Activated naive CD4-positive, alpha-beta T cell treated with anti-CD3 and anti-CD28 coated beads for 36 hours (primary cell): ENCODE measurements at regions of chr3 and their contacts with region 1.

Region 1: DNA sequence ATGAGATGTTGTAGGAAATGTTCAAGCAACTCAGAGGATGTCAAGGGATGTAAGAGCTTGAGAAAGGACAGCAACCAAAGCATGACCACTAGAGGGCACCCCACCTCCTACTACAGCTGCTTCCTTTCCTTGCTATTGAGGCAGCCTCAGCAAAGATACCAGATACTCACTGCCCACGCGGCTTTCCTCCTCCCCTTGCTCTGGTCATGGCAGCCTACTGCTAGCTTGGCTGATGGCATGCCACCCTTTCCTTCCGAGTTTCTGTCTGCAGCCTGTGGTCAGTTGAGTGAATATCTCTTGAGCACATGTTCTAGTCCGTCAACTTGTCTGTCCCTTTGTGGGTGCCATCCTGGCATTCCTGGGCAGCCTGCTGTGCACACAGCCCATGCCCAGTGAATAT is 4.4 kb upstream of the CXCR6 start:
- DNase-seq: peak; percentile 94
- H3K4me3 Mint-ChIP-seq: no peak overlapping the region
- H3K27ac Mint-ChIP-seq: no peak overlapping the region
- H3K4me1 Mint-ChIP-seq: peaks cover 25% of the 10 kb centered on the region
- H3K27me3 Mint-ChIP-seq: peaks cover 3% of the 10 kb centered on the region

Region 2: DNA sequence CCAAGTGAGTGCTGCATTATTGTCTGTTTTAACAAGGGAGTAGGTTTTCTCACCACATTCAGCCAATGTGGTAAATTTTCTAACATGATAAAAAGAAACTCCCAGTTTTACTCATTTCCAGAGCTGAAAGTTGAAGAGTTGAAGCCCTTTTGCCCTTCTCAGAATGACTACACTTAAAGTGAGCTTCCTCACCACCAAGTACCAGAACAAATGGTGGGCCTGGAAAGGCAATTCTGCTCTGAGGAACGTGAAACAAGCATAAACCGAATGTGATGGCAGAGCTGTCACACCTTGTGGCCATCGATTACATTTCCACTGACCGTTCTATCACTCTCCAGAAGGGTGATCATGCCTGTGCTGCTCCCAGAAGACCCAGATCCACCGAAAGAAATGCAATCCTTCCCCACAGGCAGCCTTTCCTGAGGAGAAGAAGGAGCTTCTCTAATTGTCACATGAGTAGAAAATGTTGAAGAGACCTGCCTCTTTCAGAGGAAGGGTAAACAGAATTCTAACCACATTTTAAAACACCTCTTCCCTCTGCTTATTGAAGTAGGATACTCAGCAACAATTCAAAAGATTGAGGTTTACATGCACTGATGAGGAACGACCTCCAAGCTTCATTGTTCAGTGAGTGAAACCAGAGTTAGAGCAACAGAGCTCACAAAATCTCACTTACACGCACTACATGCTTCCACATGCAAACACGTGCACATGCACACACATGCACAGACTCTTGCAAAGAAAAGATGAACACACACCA is 73.9 kb before region 1 on chr3:
- CTCF ChIA-PET with region 1: no interaction called
- intact Hi-C with region 1: loop called (anchors 1 kb)
- DNase-seq: peak; percentile 48
- H3K4me3 Mint-ChIP-seq: no peak overlapping the region
- H3K27ac Mint-ChIP-seq: no peak overlapping the region
- H3K4me1 Mint-ChIP-seq: peaks cover 44% of the 10 kb centered on the region
- H3K27me3 Mint-ChIP-seq: peaks cover 53% of the 10 kb centered on the region

Region 3: DNA sequence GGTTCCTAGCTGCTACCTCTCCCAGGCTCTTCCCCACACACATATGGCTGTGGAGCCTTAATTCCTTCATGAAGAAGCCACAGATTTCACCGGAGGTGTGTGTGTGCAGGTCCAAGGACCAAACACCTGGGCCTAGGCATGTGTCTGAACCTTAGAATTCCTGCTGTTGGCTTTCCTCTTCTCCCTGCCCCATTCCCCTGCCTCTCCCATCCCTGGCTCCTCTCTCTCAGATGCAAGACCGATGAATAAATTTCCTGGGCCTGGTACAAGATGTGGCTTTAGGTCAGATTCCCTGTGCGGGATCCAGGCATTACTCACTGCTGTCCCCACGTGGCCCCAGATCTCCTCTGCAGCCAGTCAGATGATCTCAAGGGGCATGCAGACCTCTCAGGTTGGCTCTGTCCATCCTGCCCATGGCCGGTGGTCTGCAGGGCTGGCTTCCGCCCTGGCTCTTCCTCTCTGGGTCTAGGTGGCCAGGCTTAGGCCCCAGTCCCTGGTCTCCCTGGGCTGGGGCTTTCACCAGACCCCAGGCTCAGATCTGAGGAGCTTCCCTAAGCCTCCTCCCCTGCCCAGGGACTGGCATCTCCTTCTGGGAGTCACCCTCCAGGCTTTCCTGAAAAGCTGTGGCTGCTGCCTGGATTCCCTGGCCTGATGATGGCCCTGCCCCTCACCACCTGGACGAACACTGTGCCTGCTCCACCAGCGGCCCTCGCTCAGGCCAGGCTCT is 32.0 kb before region 1 on chr3:
- CTCF ChIA-PET with region 1: no interaction called
- intact Hi-C with region 1: no loop called
- DNase-seq: no peak
- H3K4me3 Mint-ChIP-seq: no peak overlapping the region
- H3K27ac Mint-ChIP-seq: no peak overlapping the region
- H3K4me1 Mint-ChIP-seq: peaks cover 11% of the 10 kb centered on the region
- H3K27me3 Mint-ChIP-seq: no peaks in the 10 kb centered on the region

Region 4: GRCh38 chr3:45962033-45962432 is 23.2 kb after region 1 on chr3:
- CTCF ChIA-PET with region 1: interaction called, 9 read pairs
- intact Hi-C with region 1: loop called (anchors 1 kb)
- DNase-seq: peak; percentile 75
- H3K4me3 Mint-ChIP-seq: no peak overlapping the region
- H3K27ac Mint-ChIP-seq: no peak overlapping the region
- H3K4me1 Mint-ChIP-seq: peaks cover 52% of the 10 kb centered on the region
- H3K27me3 Mint-ChIP-seq: no peaks in the 10 kb centered on the region

Region 5: DNA sequence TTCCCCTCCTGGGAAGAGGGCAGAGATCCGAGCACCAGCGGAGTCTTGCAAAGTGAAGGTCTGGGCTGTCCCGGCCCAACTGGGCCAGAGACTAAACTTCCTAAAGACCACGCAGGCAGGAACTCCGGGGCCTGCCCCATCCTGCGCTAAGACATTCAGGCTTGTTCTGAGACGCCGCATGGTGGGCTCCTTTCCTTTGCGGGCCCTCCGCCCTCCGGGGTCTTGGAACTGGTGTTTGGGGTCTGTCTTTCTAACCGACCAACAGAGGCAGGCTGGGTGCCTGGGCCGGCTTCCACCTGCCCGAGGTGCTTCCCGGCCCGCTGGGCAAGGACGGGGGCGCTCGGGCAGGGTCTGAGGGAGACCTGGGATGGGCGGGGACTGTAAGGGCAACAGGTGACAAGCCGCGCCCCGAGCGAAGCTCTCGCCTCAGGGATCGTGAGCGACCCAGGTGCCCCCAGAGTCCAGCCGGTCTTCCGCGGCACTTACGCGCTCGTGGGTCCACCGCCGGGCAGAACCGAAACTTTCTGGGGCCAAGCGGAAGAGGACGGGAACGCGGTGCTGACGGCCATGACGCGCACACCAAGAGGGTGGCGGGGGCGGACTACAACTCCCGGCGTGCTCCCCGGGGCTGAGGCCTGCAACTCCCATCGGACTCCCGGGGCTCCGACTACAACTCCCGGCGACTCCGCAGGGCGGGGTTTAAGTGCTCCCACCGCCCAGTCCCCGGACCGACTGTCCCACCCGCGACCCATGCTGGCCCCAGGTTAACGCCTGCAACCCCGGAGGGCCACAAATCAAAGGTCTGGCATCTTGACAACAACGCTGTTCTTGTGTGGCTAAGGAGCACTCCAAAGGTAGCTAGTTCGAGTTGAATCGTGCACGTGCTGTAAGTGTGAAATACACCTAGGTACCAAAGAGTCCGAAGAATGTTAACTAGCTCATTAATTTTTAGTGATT is 56.6 kb after region 1 on chr3 and contains the start of gene FYCO1:
- CTCF ChIA-PET with region 1: interaction called, 6 read pairs
- intact Hi-C with region 1: loop called (anchors 2 kb)
- DNase-seq: peak; percentile 94
- H3K4me3 Mint-ChIP-seq: peak within 1 kb of the TSS; percentile 82
- H3K27ac Mint-ChIP-seq: peak within 1 kb of the TSS; percentile 81
- H3K4me1 Mint-ChIP-seq: peaks cover 31% of the 10 kb centered on the region
- H3K27me3 Mint-ChIP-seq: peaks cover 3% of the 10 kb centered on the region
- total RNA-seq, gene FYCO1: 10.2 to 10.5 TPM

Region 6: DNA sequence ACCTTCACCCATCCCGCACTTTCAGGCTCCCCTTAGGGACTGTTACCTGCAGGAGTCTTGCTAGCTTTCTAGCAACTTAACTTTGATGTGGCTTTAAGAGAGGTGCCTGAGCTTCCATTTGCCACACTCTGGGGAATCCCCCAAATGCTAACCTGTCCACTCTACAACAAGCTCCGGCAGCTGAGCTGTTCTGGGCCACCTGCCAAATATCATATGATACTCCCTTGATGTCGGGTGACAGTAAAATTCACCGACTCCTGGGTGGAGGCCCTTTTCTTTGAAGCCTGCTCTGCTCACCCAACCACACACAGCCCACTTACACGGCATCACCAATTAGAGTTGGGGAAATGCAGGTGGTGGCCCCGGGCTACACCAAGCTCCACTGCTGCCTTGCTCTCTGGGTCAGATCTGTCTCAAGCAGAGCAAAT is 126.4 kb after region 1 on chr3:
- CTCF ChIA-PET with region 1: interaction called, 10 read pairs
- intact Hi-C with region 1: loop called (anchors 1 kb)
- DNase-seq: peak; percentile 89
- H3K4me3 Mint-ChIP-seq: no peak overlapping the region
- H3K27ac Mint-ChIP-seq: no peak overlapping the region
- H3K4me1 Mint-ChIP-seq: peaks cover 67% of the 10 kb centered on the region
- H3K27me3 Mint-ChIP-seq: peaks cover 49% of the 10 kb centered on the region

Region 7: GRCh38 chr3:46098319-46098761 is 159.5 kb after region 1 on chr3:
- CTCF ChIA-PET with region 1: no interaction called
- intact Hi-C with region 1: no loop called
- DNase-seq: peak; percentile 69
- H3K4me3 Mint-ChIP-seq: no peak overlapping the region
- H3K27ac Mint-ChIP-seq: peak overlapping the region; percentile 76
- H3K4me1 Mint-ChIP-seq: peaks cover 31% of the 10 kb centered on the region
- H3K27me3 Mint-ChIP-seq: peaks cover 20% of the 10 kb centered on the region

Region 8: GRCh38 chr3:46378426-46378942 is 439.6 kb after region 1 on chr3:
- CTCF ChIA-PET with region 1: interaction called, 5 read pairs
- intact Hi-C with region 1: loop called (anchors 2 kb)
- DNase-seq: peak; percentile 85
- H3K4me3 Mint-ChIP-seq: no peak overlapping the region
- H3K27ac Mint-ChIP-seq: no peak overlapping the region
- H3K4me1 Mint-ChIP-seq: peaks cover 19% of the 10 kb centered on the region
- H3K27me3 Mint-ChIP-seq: peaks cover 17% of the 10 kb centered on the region